ENCODE measurements at regions of chr21 and their contacts with region 1.

Region 1: GRCh38 chr21:31198575-31198974 is 145.5 kb downstream of the TIAM1 start:
- DNase-seq: no peak

Region 2: DNA sequence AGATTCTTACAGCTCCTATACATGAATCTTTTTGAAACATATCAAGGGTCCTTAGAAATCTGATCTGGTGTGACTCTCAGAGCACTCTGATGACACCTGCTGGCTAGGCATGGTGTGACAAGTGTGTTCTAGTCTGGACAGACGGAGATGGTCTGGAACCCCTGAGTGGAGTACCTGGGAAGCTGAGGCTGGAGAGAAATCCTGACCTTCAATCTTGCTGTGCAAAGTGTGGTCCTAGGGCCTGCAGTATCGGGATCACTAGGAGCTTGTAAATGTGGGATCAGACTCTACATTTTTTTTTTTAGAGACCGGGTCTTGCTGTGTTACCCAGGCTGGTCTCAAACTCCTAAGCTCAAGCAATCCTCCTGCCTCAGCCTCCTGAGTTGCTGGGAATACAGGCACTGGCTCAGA is 382.3 kb after region 1 on chr21:
- intact Hi-C with region 1: loop called (anchors 1 kb)
- DNase-seq: peak in 9 of 10 donors; percentile 32 to 94 (median 78)

Region 3: GRCh38 chr21:31604591-31605190 is 406.1 kb after region 1 on chr21:
- intact Hi-C with region 1: loop called (anchors 2 kb)
- DNase-seq: peak; percentile 41 to 95 (median 75)

Measured in posterior cingulate gyrus (tissue), 11 donors.